ENCODE measurements at regions of chr6 and their contacts with region 1.

Region 1: GRCh38 chr6:43769526-43770416 is at the start of gene VEGFA:
- DNase-seq: peak; percentile 91 to 95 (median 93)
- ATAC-seq: peak; percentile 71 to 80 (median 76)
- H3K4me3 ChIP-seq: peak within 1 kb of the TSS; percentile 64 to 99 (median 92)
- H3K27ac ChIP-seq: peak within 1 kb of the TSS; percentile 89 to 99 (median 97)
- H3K4me1 ChIP-seq: peaks cover 6 to 42% (median 33%) of the 10 kb centered on the region in 12 donors
- H3K27me3 ChIP-seq: no peaks in the 10 kb centered on the region
- CTCF ChIP-seq: peak; percentile 93 to 99 (median 98)
- POLR2A ChIP-seq: peak; percentile 94 to 98
- total RNA-seq, gene VEGFA: 83.0 to 238 (median 171) TPM

Region 2: GRCh38 chr6:43667245-43668150 is 102.3 kb before region 1 on chr6:
- intact Hi-C with region 1: loop called in 6 of 10 experiments (anchors 5 kb)
- DNase-seq: peak; percentile 75 to 89 (median 81)
- ATAC-seq: peak; percentile 39 to 71 (median 52)
- H3K4me3 ChIP-seq: peak overlapping the region in 2 of 12 donors; percentile 13 to 24
- H3K27ac ChIP-seq: peak overlapping the region; percentile 11 to 87 (median 69)
- H3K4me1 ChIP-seq: peaks cover 11 to 47% (median 37%) of the 10 kb centered on the region in 12 donors
- H3K27me3 ChIP-seq: no peaks in the 10 kb centered on the region
- CTCF ChIP-seq: peak; percentile 89 to 98 (median 94)
- POLR2A ChIP-seq: no peak

Region 3: GRCh38 chr6:43817192-43817591 is 47.4 kb after region 1 on chr6:
- intact Hi-C with region 1: loop called in 2 of 10 experiments (anchors 5 kb)
- DNase-seq: peak in 4 of 5 donors; percentile 41 to 75 (median 62)
- ATAC-seq: peak; percentile 89 to 94 (median 93)
- H3K4me3 ChIP-seq: no peak overlapping the region
- H3K27ac ChIP-seq: peak overlapping the region in 2 of 12 donors; percentile 32 to 54
- H3K4me1 ChIP-seq: peaks cover 0 to 29% (median 0%) of the 10 kb centered on the region in 12 donors
- H3K27me3 ChIP-seq: no peaks in the 10 kb centered on the region
- CTCF ChIP-seq: peak in 11 of 12 donors; percentile 22 to 52 (median 41)
- POLR2A ChIP-seq: no peak

Region 4: GRCh38 chr6:43951063-43951755 is 181.4 kb after region 1 on chr6:
- intact Hi-C with region 1: loop called (anchors 1 to 10 kb)
- DNase-seq: peak in 4 of 5 donors; percentile 58 to 83 (median 67)
- ATAC-seq: peak; percentile 49 to 67 (median 55)
- H3K4me3 ChIP-seq: no peak overlapping the region
- H3K27ac ChIP-seq: peak overlapping the region in 6 of 12 donors; percentile 24 to 98 (median 72)
- H3K4me1 ChIP-seq: peaks cover 0 to 33% (median 4%) of the 10 kb centered on the region in 12 donors
- H3K27me3 ChIP-seq: peaks cover 0 to 7% (median 0%) of the 10 kb centered on the region in 9 donors
- CTCF ChIP-seq: peak; percentile 29 to 66 (median 50)
- POLR2A ChIP-seq: no peak

Region 5: DNA sequence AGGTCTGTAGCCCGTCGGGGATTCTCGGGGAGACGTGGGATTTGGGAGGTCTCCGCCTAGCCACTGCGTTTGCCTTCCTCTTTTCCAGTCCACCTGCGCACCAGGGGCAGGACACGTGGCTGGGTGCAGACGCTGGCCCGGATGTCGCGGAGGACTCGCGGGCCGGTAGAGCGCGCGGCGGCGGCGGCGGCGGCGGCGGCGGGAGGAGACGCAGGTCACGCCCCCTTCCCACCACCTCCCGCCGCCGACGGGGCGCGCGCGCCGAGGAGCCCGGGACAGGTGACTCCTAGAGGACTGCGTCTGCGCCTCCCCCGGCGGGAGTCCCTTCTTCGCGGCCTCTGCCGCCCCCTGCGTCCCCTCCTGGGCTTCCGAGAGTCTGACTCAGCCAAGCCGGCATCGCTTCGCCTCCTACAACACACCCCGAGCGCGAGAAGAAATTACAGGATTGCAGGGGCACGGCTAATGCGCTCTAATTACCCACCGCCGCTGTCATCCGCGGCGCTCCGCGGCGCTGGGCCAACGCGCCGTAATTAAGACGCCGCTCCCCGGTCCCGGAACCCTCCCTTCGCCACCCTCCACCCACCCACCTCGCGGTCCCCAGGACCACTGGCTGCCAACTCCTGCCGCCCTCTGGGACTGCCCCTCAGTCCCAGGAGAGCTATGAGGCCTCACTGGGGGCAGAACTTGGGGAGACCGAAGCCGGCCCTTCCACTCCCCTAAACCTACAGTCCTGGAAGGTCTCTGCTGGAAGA is 233.0 kb after region 1 on chr6:
- intact Hi-C with region 1: loop called in 5 of 10 experiments (anchors 2 to 5 kb)
- DNase-seq: peak; percentile 46 to 76 (median 59)
- ATAC-seq: peak in 3 of 4 donors; percentile 9 to 54 (median 50)
- H3K4me3 ChIP-seq: peak overlapping the region; percentile 3 to 49 (median 38)
- H3K27ac ChIP-seq: peak overlapping the region in 10 of 12 donors; percentile 47 to 97 (median 86)
- H3K4me1 ChIP-seq: peaks cover 0 to 52% (median 17%) of the 10 kb centered on the region in 12 donors
- H3K27me3 ChIP-seq: peaks cover 0 to 37% (median 17%) of the 10 kb centered on the region in 9 donors
- CTCF ChIP-seq: peak in 1 of 12 donors; percentile 31
- POLR2A ChIP-seq: no peak

Region 6: GRCh38 chr6:44237813-44238433 is 468.2 kb after region 1 on chr6:
- intact Hi-C with region 1: loop called in 2 of 10 experiments (anchors 10 kb)
- DNase-seq: peak; percentile 80 to 91 (median 83)
- ATAC-seq: peak; percentile 30 to 81 (median 74)
- H3K4me3 ChIP-seq: peak overlapping the region; percentile 32 to 75 (median 62)
- H3K27ac ChIP-seq: peak overlapping the region; percentile 87 to 99 (median 95)
- H3K4me1 ChIP-seq: peaks cover 3 to 52% (median 39%) of the 10 kb centered on the region in 12 donors
- H3K27me3 ChIP-seq: no peaks in the 10 kb centered on the region
- CTCF ChIP-seq: peak; percentile 95 to 100 (median 98)
- POLR2A ChIP-seq: peak in 1 of 2 donors; percentile 29

Measured in heart left ventricle (tissue), 16 donors.